ENCODE measurements at regions of chr14 and their contacts with region 1.

Region 1: GRCh38 chr14:95993768-95994592 is 45.2 kb upstream of the C14orf132 start:
- DNase-seq: no peak
- H3K4me3 ChIP-seq: no peak overlapping the region
- CTCF ChIP-seq: peak; percentile 56

Region 2: DNA sequence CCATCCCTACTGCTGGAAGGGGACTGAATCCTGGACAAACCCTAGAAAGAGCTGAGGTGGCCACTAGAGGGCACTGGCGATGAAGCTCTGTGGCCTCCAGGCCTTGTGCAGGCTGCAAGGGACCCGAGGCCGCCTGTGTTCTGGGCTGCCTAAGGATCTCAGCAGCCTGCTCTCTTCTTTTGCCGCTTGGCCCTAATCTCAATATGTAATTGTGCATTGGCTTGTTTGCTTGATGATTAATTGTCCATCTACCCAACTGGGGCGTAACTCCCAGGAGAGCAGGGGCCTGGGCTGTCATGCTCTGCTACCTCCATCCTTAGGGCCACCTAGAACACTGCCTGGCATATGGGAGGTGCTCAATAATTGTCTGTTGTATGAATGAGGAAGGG is 551.4 kb before region 1 on chr14:
- CTCF ChIA-PET with region 1: interaction called, 14 read pairs
- POLR2A ChIA-PET with region 1: no interaction called
- DNase-seq: no peak
- H3K4me3 ChIP-seq: no peak overlapping the region
- CTCF ChIP-seq: peak; percentile 93

Region 3: GRCh38 chr14:95774265-95775160 is 219.5 kb before region 1 on chr14:
- CTCF ChIA-PET with region 1: interaction called, 12 read pairs
- POLR2A ChIA-PET with region 1: no interaction called
- DNase-seq: no peak
- H3K4me3 ChIP-seq: no peak overlapping the region
- CTCF ChIP-seq: peak; percentile 80

Region 4: GRCh38 chr14:96011607-96012006 is 17.6 kb after region 1 on chr14:
- CTCF ChIA-PET with region 1: interaction called, 16 read pairs
- POLR2A ChIA-PET with region 1: no interaction called
- DNase-seq: no peak
- H3K4me3 ChIP-seq: no peak overlapping the region
- CTCF ChIP-seq: no peak

Region 5: GRCh38 chr14:96275177-96276112 is 281.5 kb after region 1 on chr14:
- CTCF ChIA-PET with region 1: interaction called, 134 read pairs
- POLR2A ChIA-PET with region 1: interaction called, 3 read pairs
- DNase-seq: peak; percentile 52
- H3K4me3 ChIP-seq: no peak overlapping the region
- CTCF ChIP-seq: peak; percentile 97